ENCODE measurements at regions of chr12 and their contacts with region 1.

Region 1: DNA sequence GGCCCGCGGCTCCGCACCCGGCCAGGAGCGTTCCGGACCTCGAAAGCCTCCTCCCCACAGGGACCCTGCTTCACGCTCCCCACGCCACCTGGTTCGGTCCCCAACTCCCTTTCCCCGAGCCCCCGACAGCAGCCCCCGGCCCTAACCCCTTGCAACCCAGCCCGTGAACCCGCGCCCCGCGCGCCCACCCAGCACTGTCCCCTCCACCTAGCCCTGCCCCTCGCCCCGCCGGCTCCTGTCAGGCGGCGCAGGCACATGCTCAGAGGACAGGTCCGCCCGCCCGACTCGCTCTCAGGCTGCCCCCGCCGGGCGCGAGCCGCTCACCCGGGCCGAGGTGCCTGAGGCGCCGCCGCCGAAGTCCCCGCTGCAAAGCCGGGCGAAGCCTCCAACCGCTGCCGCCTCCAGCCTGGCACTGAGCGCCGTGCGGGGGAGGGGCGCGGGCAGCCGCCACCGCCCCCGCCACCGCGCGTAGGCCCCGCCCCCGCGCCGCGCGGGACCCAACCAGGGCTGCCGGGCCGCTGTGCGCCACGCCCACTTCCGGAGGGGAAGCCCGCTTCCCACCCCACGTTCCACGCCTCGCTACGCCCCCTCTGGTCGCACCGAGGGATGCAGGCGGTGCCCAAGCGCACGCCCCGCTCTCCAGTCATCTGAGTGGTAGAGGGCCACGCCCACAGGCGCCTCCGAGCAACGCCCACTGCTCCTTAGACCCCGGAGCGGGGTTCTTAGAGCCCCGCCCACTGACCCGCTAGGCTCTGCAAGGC is at the start of gene CORO1C:
- DNase-seq: peak; percentile 99
- ATAC-seq: peak; percentile 88
- total RNA-seq, gene CORO1C: 69.1 TPM

Region 2: DNA sequence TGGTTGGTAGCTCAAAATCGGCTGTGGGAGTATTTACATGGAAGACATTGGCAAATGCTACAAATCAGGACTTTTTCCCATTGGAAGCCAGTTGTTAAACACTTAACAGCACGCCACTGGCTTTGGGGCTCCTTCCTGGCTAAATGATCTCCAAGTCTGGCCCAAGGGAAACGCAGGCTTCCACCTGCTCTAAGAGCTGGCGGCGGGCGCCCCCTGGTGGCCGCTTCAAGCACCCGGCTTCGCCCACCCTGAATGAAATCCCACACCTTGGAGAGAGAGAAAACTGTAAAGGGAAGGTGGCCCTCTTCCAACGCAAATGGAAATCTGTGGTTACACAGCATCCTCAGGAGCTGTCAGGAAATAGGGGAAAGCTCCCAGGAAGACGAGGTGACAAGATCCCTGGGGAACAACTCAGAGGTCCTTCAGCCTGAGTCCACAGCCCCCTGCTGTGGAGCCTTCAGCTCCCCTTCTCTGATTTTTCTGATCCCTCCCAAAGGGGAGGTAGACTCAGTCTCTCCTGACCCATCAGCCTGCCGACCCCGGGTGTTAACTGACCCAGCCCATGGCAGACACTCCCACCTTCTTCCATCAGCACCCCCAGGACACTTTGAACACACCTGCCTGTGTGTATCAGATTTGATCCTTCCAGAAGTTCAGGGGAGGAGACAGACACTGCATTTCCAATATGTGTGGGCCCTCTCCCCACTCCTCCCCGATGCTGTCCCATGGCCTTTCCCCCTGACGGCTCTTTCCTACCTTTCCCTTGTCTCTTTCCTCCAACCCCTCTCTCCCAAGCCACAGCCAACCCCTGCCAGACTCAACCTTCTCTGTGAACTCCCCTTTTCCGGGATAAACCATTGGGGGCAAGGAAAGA is 113.0 kb before region 1 on chr12:
- intact Hi-C with region 1: no loop called
- DNase-seq: peak; percentile 88
- ATAC-seq: peak; percentile 91

Region 3: DNA sequence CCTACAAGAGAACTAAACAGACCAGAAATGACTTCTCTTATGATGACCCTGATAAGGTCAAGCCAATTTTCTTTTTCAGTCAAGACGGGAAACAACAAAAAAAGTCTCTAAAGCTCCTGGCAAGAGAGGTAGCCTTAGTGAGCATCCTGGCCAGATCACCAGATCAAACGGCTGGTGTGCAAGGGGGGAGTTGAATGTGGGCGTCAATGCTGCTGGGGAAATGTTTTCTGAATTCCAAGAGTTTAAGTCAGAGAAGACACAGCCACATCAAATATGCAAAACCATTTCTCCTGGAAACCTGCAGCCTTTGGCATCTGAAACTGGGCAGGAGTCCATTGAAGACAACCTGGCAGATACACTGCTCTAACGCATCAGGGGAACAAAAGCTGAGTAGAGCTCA is 81.6 kb before region 1 on chr12:
- intact Hi-C with region 1: no loop called
- DNase-seq: no peak
- ATAC-seq: no peak

Region 4: DNA sequence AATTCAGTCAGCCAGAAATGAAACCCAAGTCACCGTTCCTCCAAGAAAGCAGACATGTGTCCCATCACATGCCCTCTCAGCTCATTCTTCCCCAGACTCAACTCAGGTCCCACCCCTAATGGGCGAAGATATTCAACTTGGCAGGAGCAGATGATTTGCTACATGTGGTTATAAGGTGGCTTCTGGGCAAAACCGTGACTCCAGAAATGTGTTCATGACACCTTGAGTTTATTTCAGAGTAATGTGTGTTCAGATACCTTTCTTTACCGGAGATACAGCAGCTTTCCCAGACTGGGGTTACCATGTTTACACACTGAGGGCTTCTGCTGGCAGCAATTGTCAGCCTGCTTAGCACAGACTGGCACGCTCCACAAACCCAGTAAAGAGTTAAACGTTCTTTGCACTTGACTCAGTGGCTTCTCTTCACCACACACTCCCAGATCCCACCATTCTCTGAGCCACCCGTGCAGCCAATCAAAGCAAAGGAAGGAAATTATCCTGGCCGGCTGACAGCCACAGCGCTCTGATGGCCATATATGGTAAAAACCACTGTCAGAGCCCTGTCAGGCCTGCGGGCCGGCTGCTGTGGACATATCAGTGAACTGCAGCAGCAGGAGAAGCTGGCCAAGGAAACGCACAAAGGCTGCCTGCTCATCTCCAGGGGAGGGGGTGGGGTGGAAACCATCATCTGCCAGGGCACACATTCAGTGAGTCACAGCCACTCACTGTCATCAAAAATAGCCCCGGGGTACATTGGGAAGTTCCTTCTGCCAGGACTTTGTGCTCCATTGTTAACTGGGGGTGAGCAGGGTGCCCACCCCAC is 39.9 kb before region 1 on chr12:
- intact Hi-C with region 1: loop called (anchors 5 kb)
- DNase-seq: peak; percentile 97
- ATAC-seq: peak; percentile 90

Region 5: GRCh38 chr12:108773798-108774788 is 42.8 kb after region 1 on chr12:
- intact Hi-C with region 1: loop called (anchors 5 kb)
- DNase-seq: peak; percentile 93
- ATAC-seq: peak; percentile 93

Region 6: DNA sequence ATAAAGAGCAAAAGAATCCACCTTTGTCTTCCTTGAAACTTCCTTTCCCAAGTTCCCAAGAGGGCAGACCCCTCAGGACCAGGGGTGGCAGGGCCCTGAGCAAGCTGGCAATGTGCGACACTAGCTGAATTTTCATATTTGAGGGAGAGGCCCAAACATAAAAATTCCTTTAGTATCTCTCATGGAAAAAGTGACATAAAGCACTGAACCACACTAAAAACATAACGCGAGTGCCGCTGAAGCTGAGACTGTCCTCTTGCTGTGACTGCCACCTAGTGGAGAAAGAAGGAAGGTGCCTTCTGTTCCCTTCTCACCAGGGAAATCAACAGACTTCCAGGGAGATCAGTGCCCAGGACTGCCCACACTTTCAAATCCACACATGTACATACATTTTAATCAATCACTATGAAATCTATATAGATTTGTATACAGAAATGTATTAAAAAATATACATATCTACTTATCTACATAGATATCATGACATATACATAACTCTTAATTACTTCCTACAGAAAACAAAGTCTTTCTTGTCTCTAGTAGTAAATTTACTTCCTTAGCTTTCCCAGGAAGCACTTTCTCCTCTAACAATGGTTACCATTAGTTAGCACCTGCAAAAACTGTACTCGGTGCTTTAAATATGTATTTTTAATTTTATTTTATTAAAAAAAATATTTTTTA is 72.3 kb after region 1 on chr12:
- intact Hi-C with region 1: loop called (anchors 5 kb)
- DNase-seq: peak; percentile 60
- ATAC-seq: peak; percentile 84

Region 7: DNA sequence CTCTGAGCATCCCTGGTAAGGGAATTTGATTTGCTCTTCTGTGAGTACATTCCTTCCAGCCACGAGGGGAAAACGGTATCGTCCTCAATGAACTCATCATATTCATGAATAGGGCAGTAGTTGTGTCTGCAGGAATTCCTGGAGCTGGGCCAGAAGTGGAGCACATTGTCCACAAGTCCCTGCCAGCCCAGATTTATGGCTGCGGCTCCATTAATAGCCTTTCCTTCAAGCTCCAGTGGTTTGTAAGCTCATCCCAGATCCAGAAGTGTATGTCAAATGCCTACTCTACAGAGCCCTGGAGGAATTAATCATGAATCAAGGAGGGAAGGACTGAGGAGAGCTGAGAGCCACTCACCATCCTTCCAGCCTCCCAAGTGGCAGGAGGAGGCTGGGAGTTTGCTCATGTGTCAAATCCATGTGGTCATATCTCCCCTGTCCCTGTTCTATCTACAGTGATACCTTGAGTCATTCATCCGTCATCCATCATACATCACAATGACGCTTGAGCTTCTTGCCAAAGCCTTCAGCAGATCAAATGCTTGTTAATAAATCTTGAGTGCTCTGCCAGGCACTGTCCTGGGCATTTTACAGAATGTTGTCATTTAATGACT is 224.0 kb after region 1 on chr12:
- intact Hi-C with region 1: no loop called
- DNase-seq: peak; percentile 61
- ATAC-seq: peak; percentile 81

Measured in Right ventricle myocardium superior (tissue), 1 donor.